ENCODE measurements at regions of chr2 and their contacts with region 1.

Region 1: DNA sequence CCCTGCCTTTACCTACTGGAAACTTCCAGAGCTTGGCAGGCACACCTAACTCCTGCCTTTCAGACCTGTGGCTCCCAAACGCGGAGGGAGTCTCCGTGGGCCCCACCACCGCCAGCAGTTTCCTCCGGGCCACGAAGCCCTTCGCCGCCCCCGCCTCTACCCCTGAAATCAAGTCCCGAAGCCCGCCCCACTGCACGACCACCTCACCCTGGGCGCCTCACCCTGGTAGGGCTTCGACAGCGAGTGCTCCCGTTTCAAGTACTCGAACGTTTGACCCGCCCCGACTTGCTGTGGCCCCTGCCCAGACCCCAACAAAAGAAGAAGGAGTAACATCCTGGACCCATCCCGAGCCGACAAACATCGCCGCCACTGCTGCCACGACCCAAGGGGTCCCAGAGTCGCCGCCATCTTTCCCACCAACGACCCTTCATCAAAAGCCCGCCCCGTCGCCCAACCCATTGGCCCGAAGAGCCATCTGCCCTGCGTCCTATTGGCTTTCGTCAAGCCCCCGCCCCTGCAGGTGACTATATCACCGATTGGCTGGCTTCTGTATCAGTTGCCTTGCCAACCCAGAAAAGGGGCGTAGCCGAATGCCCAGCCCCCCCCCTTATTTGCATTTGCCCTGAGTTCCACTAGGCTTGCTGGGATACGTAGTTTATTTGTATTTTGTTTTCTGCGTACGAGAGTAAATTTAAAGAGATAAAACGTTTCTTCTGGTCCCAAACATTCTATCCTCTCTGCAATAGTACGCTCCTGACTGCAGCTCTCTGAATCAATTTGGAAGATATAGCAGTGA is at the start of gene LMAN2L:
- DNase-seq: peak; percentile 97 to 98
- ATAC-seq: peak; percentile 99 to 100 (median 99)
- H3K4me3 ChIP-seq: peak within 1 kb of the TSS; percentile 77
- H3K27ac ChIP-seq: peak within 1 kb of the TSS; percentile 64
- H3K4me1 ChIP-seq: peaks cover 32% of the 10 kb centered on the region
- H3K27me3 ChIP-seq: no peaks in the 10 kb centered on the region
- CTCF ChIP-seq: no peak
- total RNA-seq, gene LMAN2L: 10.0 to 20.7 (median 12.9) TPM

Region 2: GRCh38 chr2:96665083-96665569 is 74.7 kb before region 1 on chr2:
- intact Hi-C with region 1: loop called in 1 of 2 experiments (anchors 5 kb)
- DNase-seq: peak in 1 of 2 donors; percentile 64
- ATAC-seq: peak; percentile 94 to 96 (median 94)
- H3K4me3 ChIP-seq: no peak overlapping the region
- H3K27ac ChIP-seq: peak overlapping the region; percentile 86
- H3K4me1 ChIP-seq: peaks cover 18% of the 10 kb centered on the region
- H3K27me3 ChIP-seq: no peaks in the 10 kb centered on the region
- CTCF ChIP-seq: no peak

Region 3: GRCh38 chr2:96760036-96760985 is 20.5 kb after region 1 on chr2 and contains the start of gene CNNM4:
- intact Hi-C with region 1: loop called in 1 of 2 experiments (anchors 2 kb)
- DNase-seq: peak; percentile 95 to 97
- ATAC-seq: peak; percentile 93 to 96 (median 94)
- H3K4me3 ChIP-seq: peak within 1 kb of the TSS; percentile 70
- H3K27ac ChIP-seq: peak within 1 kb of the TSS; percentile 76
- H3K4me1 ChIP-seq: peaks cover 34% of the 10 kb centered on the region
- H3K27me3 ChIP-seq: no peaks in the 10 kb centered on the region
- CTCF ChIP-seq: no peak
- total RNA-seq, gene CNNM4: 9.9 to 28.8 (median 14.3) TPM

Region 4: GRCh38 chr2:96801005-96801785 is 61.4 kb after region 1 on chr2:
- intact Hi-C with region 1: loop called in 1 of 2 experiments (anchors 5 kb)
- DNase-seq: peak; percentile 77 to 92
- ATAC-seq: peak; percentile 97 to 99 (median 98)
- H3K4me3 ChIP-seq: no peak overlapping the region
- H3K27ac ChIP-seq: peak overlapping the region; percentile 80
- H3K4me1 ChIP-seq: peaks cover 8% of the 10 kb centered on the region
- H3K27me3 ChIP-seq: no peaks in the 10 kb centered on the region
- CTCF ChIP-seq: peak; percentile 84